Activated CD4-positive, alpha-beta memory T cell treated with anti-CD3 and anti-CD28 coated beads for 36 hours (primary cell): ENCODE measurements at regions of chr4 and their contacts with region 1.

Region 1: GRCh38 chr4:173420324-173420752 is 21.4 kb upstream of the SCRG1 start:
- DNase-seq: no peak
- H3K4me3 Mint-ChIP-seq: no peak overlapping the region
- H3K27ac Mint-ChIP-seq: no peak overlapping the region
- H3K4me1 Mint-ChIP-seq: peaks cover 8% of the 10 kb centered on the region
- H3K27me3 Mint-ChIP-seq: no peaks in the 10 kb centered on the region

Region 2: DNA sequence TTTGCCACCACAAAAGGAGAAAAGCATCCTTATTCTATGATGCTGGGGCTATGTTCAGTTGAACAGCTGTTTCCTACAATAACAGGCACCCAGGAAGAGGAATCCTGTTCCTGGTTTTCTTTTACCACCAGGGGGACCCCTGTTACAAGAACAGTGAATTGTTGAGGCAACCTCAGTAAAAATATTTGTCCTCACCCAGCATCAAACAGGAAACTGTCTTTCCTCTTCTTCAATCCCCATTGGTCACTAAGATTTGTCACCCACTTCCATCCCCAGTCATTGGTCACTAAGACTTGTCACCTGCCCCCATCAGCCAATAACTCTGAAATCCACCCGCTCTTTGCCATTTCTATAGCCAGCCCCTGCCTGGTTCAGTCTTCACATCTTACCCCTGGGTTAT is 395.2 kb before region 1 on chr4:
- CTCF ChIA-PET with region 1: no interaction called
- POLR2A ChIA-PET with region 1: no interaction called
- intact Hi-C with region 1: loop called (anchors 5 kb)
- DNase-seq: no peak
- H3K4me3 Mint-ChIP-seq: no peak overlapping the region
- H3K27ac Mint-ChIP-seq: no peak overlapping the region
- H3K4me1 Mint-ChIP-seq: no peaks in the 10 kb centered on the region
- H3K27me3 Mint-ChIP-seq: no peaks in the 10 kb centered on the region

Region 3: GRCh38 chr4:173288296-173288695 is 132.0 kb before region 1 on chr4:
- CTCF ChIA-PET with region 1: interaction called, 16 read pairs
- POLR2A ChIA-PET with region 1: no interaction called
- intact Hi-C with region 1: loop called (anchors 10 kb)
- DNase-seq: peak; percentile 76
- H3K4me3 Mint-ChIP-seq: no peak overlapping the region
- H3K27ac Mint-ChIP-seq: no peak overlapping the region
- H3K4me1 Mint-ChIP-seq: peaks cover 13% of the 10 kb centered on the region
- H3K27me3 Mint-ChIP-seq: no peaks in the 10 kb centered on the region

Region 4: DNA sequence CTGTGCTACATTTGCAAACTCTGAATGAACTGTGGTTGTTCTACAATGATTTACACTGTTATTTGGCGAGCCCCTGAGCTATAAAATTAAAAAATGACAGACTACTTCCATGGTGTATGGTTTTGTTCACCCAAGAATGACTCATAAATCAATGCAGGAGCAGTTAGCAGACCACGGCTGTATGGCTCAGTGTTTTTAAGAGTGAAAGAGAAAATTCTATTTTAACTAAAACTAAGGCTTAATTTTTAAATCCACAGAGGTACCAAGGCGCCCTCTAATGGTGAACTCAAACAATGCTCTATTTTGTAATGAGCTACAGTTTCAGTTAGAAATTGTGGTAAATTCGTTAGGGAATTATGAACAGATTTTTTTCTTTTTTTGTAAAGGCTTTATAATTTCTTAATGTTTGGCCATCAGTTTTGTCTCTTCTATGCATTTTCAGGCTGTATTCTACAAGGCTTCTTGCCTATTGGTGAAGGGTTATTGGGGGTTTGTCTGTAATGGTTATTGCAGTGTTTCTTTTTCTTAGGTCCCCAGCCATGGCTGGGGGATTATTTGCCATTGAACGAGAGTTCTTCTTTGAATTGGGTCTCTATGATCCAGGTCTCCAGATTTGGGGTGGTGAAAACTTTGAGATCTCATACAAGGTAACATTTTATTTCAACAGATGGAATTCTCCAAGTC is 118.7 kb before region 1 on chr4:
- CTCF ChIA-PET with region 1: interaction called, 13 read pairs
- POLR2A ChIA-PET with region 1: interaction called, 3 read pairs
- intact Hi-C with region 1: no loop called
- DNase-seq: no peak
- H3K4me3 Mint-ChIP-seq: no peak overlapping the region
- H3K27ac Mint-ChIP-seq: no peak overlapping the region
- H3K4me1 Mint-ChIP-seq: peaks cover 3% of the 10 kb centered on the region
- H3K27me3 Mint-ChIP-seq: no peaks in the 10 kb centered on the region

Region 5: GRCh38 chr4:173370477-173371291 is 49.7 kb before region 1 on chr4 and contains the start of gene SAP30:
- CTCF ChIA-PET with region 1: interaction called, 5 read pairs
- POLR2A ChIA-PET with region 1: interaction called, 5 read pairs
- intact Hi-C with region 1: loop called (anchors 2 kb)
- DNase-seq: peak; percentile 99
- H3K4me3 Mint-ChIP-seq: peak within 1 kb of the TSS; percentile 100
- H3K27ac Mint-ChIP-seq: peak within 1 kb of the TSS; percentile 99
- H3K4me1 Mint-ChIP-seq: peaks cover 33% of the 10 kb centered on the region
- H3K27me3 Mint-ChIP-seq: peaks cover 4% of the 10 kb centered on the region
- total RNA-seq, gene SAP30: 26.1 to 26.5 TPM

Region 6: GRCh38 chr4:173494013-173494970 is 74.0 kb after region 1 on chr4:
- CTCF ChIA-PET with region 1: interaction called, 41 read pairs
- POLR2A ChIA-PET with region 1: no interaction called
- intact Hi-C with region 1: loop called (anchors 1 kb)
- DNase-seq: peak; percentile 72
- H3K4me3 Mint-ChIP-seq: peak overlapping the region; percentile 77
- H3K27ac Mint-ChIP-seq: no peak overlapping the region
- H3K4me1 Mint-ChIP-seq: peaks cover 14% of the 10 kb centered on the region
- H3K27me3 Mint-ChIP-seq: peaks cover 21% of the 10 kb centered on the region

Region 7: DNA sequence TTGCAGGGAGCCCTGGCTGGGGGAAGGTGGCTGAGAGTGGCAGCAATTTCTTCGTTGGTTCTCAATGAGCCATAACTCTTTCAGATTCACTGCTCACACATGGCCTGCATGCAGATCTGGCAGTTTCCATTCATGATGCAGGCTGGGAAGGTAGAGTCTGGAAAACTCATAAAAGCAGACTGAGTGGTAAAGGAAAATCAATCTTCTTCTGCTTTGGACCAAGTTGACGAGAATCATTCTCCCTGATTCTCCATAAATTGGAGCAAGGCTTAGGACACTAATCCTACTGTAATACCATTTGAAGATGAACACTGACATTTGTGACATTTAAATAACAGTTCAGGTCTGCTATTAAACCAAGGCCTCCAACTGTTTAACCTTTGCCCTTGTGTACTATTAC is 144.9 kb after region 1 on chr4:
- CTCF ChIA-PET with region 1: no interaction called
- POLR2A ChIA-PET with region 1: no interaction called
- intact Hi-C with region 1: no loop called
- DNase-seq: no peak
- H3K4me3 Mint-ChIP-seq: no peak overlapping the region
- H3K27ac Mint-ChIP-seq: no peak overlapping the region
- H3K4me1 Mint-ChIP-seq: no peaks in the 10 kb centered on the region
- H3K27me3 Mint-ChIP-seq: peaks cover 5% of the 10 kb centered on the region

Region 8: GRCh38 chr4:174156239-174156826 is 736.0 kb after region 1 on chr4:
- CTCF ChIA-PET with region 1: no interaction called
- POLR2A ChIA-PET with region 1: no interaction called
- intact Hi-C with region 1: loop called (anchors 5 kb)
- DNase-seq: no peak
- H3K4me3 Mint-ChIP-seq: no peak overlapping the region
- H3K27ac Mint-ChIP-seq: no peak overlapping the region
- H3K4me1 Mint-ChIP-seq: no peaks in the 10 kb centered on the region
- H3K27me3 Mint-ChIP-seq: peaks cover 11% of the 10 kb centered on the region